ENCODE measurements at regions of chr6 and their contacts with region 1.

Region 1: DNA sequence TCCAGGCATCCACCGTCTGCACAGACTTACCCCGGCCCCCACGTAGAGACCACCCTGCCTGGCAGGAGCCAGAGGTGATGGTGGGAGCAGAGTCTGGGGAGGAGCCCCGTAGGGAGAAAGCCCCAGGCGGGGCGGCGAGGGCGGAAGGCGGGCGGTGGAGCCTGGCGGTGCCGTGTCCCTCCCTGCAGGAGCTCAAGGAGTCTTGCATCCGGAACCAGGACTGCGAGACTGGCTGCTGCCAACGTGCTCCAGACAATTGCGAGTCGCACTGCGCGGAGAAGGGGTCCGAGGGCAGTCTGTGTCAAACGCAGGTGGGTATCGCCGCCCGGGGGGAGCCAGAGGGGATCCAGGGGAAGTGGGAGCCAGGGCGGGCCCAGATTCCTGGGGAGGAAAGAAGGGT is 6.0 kb downstream of the CLPSL1 start:
- DNase-seq: peak in 1 of 3 donors; percentile 59
- ATAC-seq: peak in 1 of 4 donors; percentile 39
- H3K4me3 ChIP-seq: no peak overlapping the region
- H3K27ac ChIP-seq: no peak overlapping the region
- H3K4me1 ChIP-seq: peaks cover 0 to 5% (median 0%) of the 10 kb centered on the region in 4 donors
- H3K27me3 ChIP-seq: no peaks in the 10 kb centered on the region
- CTCF ChIP-seq: no peak
- POLR2A ChIP-seq: no peak

Region 2: DNA sequence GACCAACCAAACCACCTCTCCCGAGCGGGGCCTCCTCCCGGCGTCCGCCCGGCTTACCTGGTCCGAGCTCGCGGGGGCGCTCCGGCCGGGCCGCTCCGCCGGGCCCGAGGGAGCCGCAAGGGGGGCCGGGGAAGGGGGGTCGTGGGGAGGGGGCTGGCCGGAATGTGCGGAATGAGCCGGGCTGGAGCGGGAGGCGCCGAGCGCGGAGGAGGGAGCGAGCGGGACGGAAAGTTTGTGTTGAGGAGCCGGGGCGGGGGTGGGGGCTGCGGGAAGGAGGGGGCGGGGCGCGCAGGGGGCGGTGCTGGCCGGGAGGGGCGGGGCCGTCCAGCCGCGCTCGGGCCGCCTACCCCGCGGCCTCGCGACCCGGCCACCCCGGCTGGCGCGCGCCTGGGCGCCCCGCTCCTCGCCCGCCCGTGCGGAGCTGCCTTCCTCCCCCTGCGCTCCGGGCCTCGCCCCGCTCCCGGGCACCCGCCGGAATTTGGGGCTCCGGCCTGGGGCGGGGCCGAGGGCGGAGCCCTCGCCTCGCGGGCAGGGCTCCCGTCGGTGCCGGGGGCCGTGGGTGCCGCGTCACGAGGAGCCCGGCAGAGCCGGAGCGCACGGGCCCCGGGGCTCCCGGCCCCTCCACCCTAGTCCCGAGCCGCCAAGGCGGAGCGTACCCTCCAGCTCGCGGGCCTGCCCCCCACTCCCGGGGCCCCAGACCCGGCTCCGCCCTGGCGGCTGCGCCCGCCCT is 289.8 kb before region 1 on chr6 and contains the start of gene TEAD3:
- intact Hi-C with region 1: no loop called
- DNase-seq: peak in 2 of 3 donors; percentile 58 to 68
- ATAC-seq: peak; percentile 57 to 74 (median 65)
- H3K4me3 ChIP-seq: peak within 1 kb of the TSS; percentile 68 to 91 (median 74)
- H3K27ac ChIP-seq: peak within 1 kb of the TSS; percentile 71 to 78 (median 72)
- H3K4me1 ChIP-seq: peaks cover 0 to 17% (median 6%) of the 10 kb centered on the region in 4 donors
- H3K27me3 ChIP-seq: no peaks in the 10 kb centered on the region
- CTCF ChIP-seq: peak in 1 of 4 donors; percentile 19
- POLR2A ChIP-seq: peak; percentile 49
- total RNA-seq, gene TEAD3: 5.2 to 8.5 (median 6.9) TPM

Region 3: GRCh38 chr6:35797837-35798526 is 11.2 kb after region 1 on chr6:
- intact Hi-C with region 1: loop called (anchors 1 kb)
- DNase-seq: no peak
- ATAC-seq: peak in 1 of 4 donors; percentile 17
- H3K4me3 ChIP-seq: no peak overlapping the region
- H3K27ac ChIP-seq: no peak overlapping the region
- H3K4me1 ChIP-seq: no peaks in the 10 kb centered on the region
- H3K27me3 ChIP-seq: no peaks in the 10 kb centered on the region
- CTCF ChIP-seq: no peak
- POLR2A ChIP-seq: no peak

Region 4: GRCh38 chr6:35973670-35974222 is 186.9 kb after region 1 on chr6:
- intact Hi-C with region 1: no loop called
- DNase-seq: peak; percentile 47 to 85 (median 68)
- ATAC-seq: peak; percentile 92 to 95 (median 94)
- H3K4me3 ChIP-seq: no peak overlapping the region
- H3K27ac ChIP-seq: peak overlapping the region; percentile 61 to 87 (median 87)
- H3K4me1 ChIP-seq: peaks cover 0 to 35% (median 10%) of the 10 kb centered on the region in 4 donors
- H3K27me3 ChIP-seq: no peaks in the 10 kb centered on the region
- CTCF ChIP-seq: no peak
- POLR2A ChIP-seq: peak; percentile 26

Region 5: DNA sequence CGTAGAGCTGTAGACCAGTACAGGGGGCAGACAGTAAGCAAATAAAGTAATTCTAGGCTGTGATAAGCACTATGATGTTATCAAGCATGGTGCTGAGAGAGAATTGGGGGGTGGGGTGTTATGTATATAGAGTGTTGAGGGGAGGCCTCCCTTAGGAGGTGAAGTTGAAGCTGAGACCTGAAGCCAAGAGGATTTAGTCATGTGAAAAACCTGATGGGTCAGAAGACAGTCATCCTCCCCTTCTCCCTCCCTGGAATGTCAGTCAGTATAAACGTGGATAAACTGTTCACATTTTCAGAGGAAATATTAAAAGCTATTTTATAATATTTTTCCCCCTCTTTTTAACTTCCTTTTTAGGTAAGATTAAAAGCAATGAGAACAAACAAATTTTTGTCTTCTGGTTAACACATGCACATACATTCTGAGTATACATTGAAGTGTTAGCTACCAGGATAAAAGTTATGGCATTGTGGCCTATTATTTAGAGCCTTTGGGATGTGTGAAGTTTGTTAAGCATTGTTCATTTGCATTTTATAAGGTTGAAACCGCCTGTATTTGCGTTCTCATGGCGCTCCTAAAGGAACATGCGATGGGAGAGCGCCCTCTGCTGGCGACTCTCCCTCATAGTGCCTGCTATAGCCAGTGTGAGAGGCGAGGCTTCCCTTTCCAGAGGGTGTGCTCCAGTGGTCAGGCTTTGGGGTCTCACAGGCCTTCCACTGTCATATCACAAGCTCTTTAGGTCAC is 308.1 kb after region 1 on chr6:
- intact Hi-C with region 1: no loop called
- DNase-seq: peak; percentile 80 to 84 (median 83)
- ATAC-seq: peak; percentile 88 to 94 (median 90)
- H3K4me3 ChIP-seq: peak overlapping the region in 2 of 3 donors; percentile 14 to 24
- H3K27ac ChIP-seq: peak overlapping the region; percentile 64 to 68 (median 65)
- H3K4me1 ChIP-seq: peaks cover 0 to 25% (median 14%) of the 10 kb centered on the region in 4 donors
- H3K27me3 ChIP-seq: no peaks in the 10 kb centered on the region
- CTCF ChIP-seq: peak; percentile 92 to 99 (median 98)
- POLR2A ChIP-seq: no peak